ENCODE measurements at regions of chrX and their contacts with region 1.

Region 1: GRCh38 chrX:14528629-14529289 is 577 bp upstream of the GLRA2 start:
- DNase-seq: peak; percentile 10
- ATAC-seq: peak; percentile 61
- H3K4me3 ChIP-seq: no peak overlapping the region
- H3K27ac ChIP-seq: no peak overlapping the region
- H3K4me1 ChIP-seq: no peaks in the 10 kb centered on the region
- H3K27me3 ChIP-seq: no peaks in the 10 kb centered on the region
- CTCF ChIP-seq: peak; percentile 51
- EP300 ChIP-seq: no peak
- POLR2A ChIP-seq: no peak
- RAD21 ChIP-seq: no peak

Region 2: DNA sequence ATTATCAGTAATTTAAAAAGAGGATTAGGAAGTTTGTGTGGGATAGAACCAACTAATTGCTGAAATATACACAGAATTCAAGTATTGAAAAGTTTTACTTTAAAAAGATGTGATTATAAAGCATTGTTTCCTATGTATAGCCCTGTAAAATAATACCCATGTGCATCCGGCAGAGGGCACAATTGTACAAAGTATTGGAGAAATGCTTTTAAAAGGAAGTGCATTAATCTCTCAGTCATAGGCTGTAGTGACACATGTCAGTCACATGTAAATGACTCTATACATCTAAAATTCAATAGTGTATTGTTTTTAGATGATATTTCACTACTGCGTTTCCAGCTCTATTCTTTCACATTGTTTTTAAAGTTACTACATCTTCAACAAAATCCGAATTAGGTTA is 489.4 kb before region 1 on chrX:
- CTCF ChIA-PET with region 1: interaction called, 3 read pairs
- POLR2A ChIA-PET with region 1: no interaction called
- in situ Hi-C with region 1: no loop called
- intact Hi-C with region 1: loop called (anchors 5 kb)
- DNase-seq: peak; percentile 28
- ATAC-seq: peak; percentile 62; the same call in 2 of the 3 replicates
- H3K4me3 ChIP-seq: no peak overlapping the region
- H3K27ac ChIP-seq: no peak overlapping the region
- H3K4me1 ChIP-seq: peaks cover 12% of the 10 kb centered on the region; the same call in 1 of the 2 replicates
- H3K27me3 ChIP-seq: no peaks in the 10 kb centered on the region
- CTCF ChIP-seq: peak; percentile 60
- EP300 ChIP-seq: no peak
- POLR2A ChIP-seq: no peak
- RAD21 ChIP-seq: no peak

Region 3: GRCh38 chrX:14095702-14096101 is 433.1 kb before region 1 on chrX:
- CTCF ChIA-PET with region 1: interaction called, 4 read pairs
- POLR2A ChIA-PET with region 1: no interaction called
- in situ Hi-C with region 1: loop called (anchors 25 kb)
- intact Hi-C with region 1: no loop called
- DNase-seq: peak; percentile 47
- ATAC-seq: peak; percentile 89
- H3K4me3 ChIP-seq: no peak overlapping the region; a peak in 1 of 6 replicates
- H3K27ac ChIP-seq: no peak overlapping the region
- H3K4me1 ChIP-seq: no peaks in the 10 kb centered on the region
- H3K27me3 ChIP-seq: no peaks in the 10 kb centered on the region; a peak in 1 of 5 replicates
- CTCF ChIP-seq: peak; percentile 83
- EP300 ChIP-seq: no peak
- POLR2A ChIP-seq: no peak
- RAD21 ChIP-seq: peak; percentile 47; the same call in 1 of the 2 replicates

Region 4: DNA sequence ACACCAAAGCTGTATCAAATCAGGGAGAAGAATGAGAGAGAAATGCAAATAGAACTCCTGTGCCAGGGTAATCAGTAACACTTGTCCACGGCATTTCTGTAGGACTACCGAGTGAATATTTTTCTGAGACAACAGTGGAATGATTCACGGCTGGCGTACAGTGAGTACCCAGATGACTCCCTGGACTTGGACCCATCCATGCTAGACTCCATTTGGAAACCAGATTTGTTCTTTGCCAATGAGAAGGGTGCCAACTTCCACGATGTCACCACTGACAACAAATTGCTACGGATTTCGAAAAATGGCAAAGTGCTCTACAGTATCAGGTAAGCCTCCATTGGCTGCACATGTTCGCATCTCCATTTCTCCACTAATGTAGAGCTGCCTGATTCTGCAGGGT is 52.3 kb after region 1 on chrX:
- CTCF ChIA-PET with region 1: no interaction called
- POLR2A ChIA-PET with region 1: no interaction called
- in situ Hi-C with region 1: no loop called
- intact Hi-C with region 1: no loop called
- DNase-seq: no peak
- ATAC-seq: no peak
- H3K4me3 ChIP-seq: no peak overlapping the region
- H3K27ac ChIP-seq: no peak overlapping the region
- H3K4me1 ChIP-seq: no peaks in the 10 kb centered on the region
- H3K27me3 ChIP-seq: no peaks in the 10 kb centered on the region
- CTCF ChIP-seq: no peak
- EP300 ChIP-seq: no peak
- POLR2A ChIP-seq: no peak
- RAD21 ChIP-seq: no peak

Measured in HepG2 (cell line).